ENCODE measurements at regions of chr15 and their contacts with region 1.

Region 1: GRCh38 chr15:80695104-80695910 is at the start of gene ABHD17C:
- DNase-seq: no peak
- H3K4me3 ChIP-seq: peak within 1 kb of the TSS; percentile 92
- H3K27me3 ChIP-seq: no peaks in the 10 kb centered on the region
- CTCF ChIP-seq: no peak
- polyA plus RNA-seq, gene ABHD17C: 19.2 and 22.6 TPM in 2 replicates

Region 2: GRCh38 chr15:80619680-80620079 is 75.6 kb before region 1 on chr15:
- CTCF ChIA-PET with region 1: interaction called, 10 read pairs
- POLR2A ChIA-PET with region 1: no interaction called
- DNase-seq: no peak
- H3K4me3 ChIP-seq: no peak overlapping the region
- H3K27me3 ChIP-seq: no peaks in the 10 kb centered on the region
- CTCF ChIP-seq: peak; percentile 47

Region 3: DNA sequence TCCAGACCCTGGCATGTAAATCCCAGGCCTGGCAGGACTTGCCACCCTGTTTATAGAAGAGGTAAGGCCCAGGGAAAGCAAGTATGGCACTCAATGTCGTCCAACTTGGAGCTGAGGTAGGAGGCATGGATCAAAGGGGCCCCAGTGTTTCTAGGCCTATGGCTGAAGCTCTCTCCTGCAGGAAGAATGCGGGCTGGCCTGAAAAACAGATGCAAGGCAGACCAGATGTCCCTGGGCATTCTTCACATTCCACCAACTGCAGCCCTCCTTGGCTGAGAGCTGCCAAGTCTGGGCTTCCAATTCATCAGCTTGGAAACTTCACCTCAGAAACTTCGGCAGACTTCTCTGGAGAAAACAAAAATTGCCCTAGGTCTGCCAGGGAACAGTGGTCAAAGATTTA is 272.1 kb after region 1 on chr15:
- CTCF ChIA-PET with region 1: no interaction called
- POLR2A ChIA-PET with region 1: no interaction called
- DNase-seq: no peak
- H3K4me3 ChIP-seq: no peak overlapping the region
- H3K27me3 ChIP-seq: no peaks in the 10 kb centered on the region
- CTCF ChIP-seq: no peak